ENCODE measurements at regions of chr1 and their contacts with region 1.

Region 1: DNA sequence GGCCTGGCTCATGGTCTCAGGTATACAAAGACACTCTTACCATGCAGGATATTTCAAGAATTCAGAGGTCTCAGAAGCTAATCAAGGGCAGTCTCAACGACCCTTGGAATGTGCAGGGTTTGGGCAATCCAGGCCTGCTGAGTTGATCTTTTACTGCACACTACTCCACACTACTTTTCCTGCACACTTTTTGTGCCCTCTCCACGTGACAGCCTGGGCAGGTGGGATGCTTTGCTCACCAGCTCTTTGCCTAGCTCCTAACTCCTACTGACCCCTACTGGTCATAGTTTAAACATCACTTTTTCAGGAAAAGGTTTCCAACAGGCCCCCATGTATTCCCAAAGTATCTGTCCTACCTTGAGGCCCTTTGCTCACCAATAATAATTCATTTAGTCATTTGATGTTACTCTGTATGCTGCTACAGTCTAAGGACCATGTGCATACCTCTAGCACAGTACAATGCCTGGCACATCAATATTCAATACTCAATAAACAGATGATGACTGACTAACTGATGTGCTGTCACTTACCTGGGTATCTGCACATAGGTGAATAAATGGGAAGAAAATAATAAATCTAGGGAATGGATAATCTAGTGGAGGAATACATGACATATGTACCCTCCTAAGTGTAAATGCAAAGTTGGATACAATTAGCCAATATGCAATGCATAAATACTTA is 9.6 kb downstream of the DUSP23 start:
- DNase-seq: no peak
- ATAC-seq: no peak
- H3K4me3 Mint-ChIP-seq: no peak overlapping the region
- H3K27ac Mint-ChIP-seq: no peak overlapping the region
- H3K4me1 Mint-ChIP-seq: no peaks in the 10 kb centered on the region
- H3K27me3 Mint-ChIP-seq: peaks cover 11% of the 10 kb centered on the region
- CTCF ChIP-seq: peak; percentile 34

Region 2: GRCh38 chr1:159132271-159132881 is 658.0 kb before region 1 on chr1:
- CTCF ChIA-PET with region 1: no interaction called
- POLR2A ChIA-PET with region 1: no interaction called
- intact Hi-C with region 1: loop called (anchors 5 kb)
- DNase-seq: peak; percentile 53
- ATAC-seq: peak; percentile 61
- H3K4me3 Mint-ChIP-seq: no peak overlapping the region
- H3K27ac Mint-ChIP-seq: no peak overlapping the region
- H3K4me1 Mint-ChIP-seq: peaks cover 2% of the 10 kb centered on the region
- H3K27me3 Mint-ChIP-seq: no peaks in the 10 kb centered on the region
- CTCF ChIP-seq: no peak

Region 3: DNA sequence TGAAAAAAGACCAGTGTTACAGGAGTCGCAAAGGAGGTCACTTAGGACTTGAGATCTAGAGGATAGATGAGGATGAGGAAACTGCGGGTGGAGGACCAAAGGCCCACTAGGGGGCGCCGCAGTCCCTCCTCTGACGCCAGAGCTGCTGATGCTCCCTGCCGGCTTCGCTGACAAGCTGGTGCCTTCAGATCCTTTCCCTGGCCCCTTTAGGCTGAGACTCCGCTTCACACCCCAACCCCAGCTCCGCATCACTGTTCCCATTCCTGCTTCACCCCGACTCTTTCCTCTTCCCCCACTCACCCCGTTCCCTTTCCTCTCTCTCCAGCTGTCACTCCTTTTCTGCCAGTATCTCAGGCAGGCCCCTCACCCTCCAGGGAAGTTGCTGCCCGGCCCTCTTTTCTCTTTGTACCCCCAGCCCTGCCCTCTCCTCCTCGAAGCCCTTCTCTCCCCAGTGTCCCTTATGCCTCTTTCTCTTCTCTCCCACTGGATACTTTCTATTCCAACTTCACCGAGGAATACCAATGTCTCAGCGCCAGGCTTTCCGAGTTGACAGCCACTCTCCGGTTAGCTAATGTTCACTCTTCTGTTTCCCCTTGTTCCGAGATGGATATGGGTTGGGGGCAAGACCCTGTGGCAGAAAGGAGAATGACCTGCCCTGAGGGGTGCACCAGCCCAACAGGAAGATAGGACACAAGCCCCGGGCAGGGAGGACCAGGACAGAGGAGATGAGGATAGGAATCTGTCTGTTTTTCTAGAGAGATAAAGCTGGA is 295.5 kb after region 1 on chr1:
- CTCF ChIA-PET with region 1: no interaction called
- POLR2A ChIA-PET with region 1: no interaction called
- intact Hi-C with region 1: no loop called
- DNase-seq: peak; percentile 60
- ATAC-seq: peak; percentile 68
- H3K4me3 Mint-ChIP-seq: no peak overlapping the region
- H3K27ac Mint-ChIP-seq: no peak overlapping the region
- H3K4me1 Mint-ChIP-seq: peaks cover 14% of the 10 kb centered on the region
- H3K27me3 Mint-ChIP-seq: peaks cover 16% of the 10 kb centered on the region
- CTCF ChIP-seq: no peak

Measured in activated B cell treated with CpG ODN at 0.5 μM for 24 hours (primary cell).